GM10248 (cell line): ENCODE measurements at regions of chr2 and their contacts with region 1.

Region 1: GRCh38 chr2:152537081-152537651 is 180.1 kb downstream of the PRPF40A start:
- DNase-seq: no peak
- CTCF ChIP-seq: no peak

Region 2: DNA sequence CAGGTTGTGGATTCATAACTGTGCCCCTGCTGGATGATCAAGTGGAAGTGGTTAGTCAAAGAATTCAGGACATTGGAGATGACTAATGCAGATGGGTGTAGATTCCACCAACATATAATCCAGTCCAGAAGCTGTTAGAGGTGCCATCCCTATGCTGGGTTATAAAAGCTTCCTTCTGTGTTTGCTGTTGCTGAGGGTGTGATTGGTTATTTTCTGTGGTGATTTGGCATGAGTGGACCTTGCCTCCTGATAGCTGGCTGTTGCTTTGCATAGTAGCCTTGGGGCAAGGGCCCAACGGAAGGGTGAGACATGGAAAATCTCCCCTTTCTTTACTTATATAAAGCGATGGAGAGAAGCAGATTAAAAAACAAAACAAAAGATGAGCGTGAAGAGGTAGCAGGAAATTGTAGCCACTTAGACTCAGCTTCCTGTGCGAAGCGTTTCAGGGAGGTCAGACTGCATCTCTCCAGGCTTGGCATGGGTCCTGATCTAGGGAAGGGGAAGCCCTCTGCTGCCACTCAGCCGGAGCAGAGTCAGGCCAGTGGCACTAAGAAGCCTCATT is 11.8 kb before region 1 on chr2:
- CTCF ChIA-PET with region 1: interaction called, 12 read pairs
- POLR2A ChIA-PET with region 1: no interaction called
- DNase-seq: no peak
- CTCF ChIP-seq: no peak

Region 3: GRCh38 chr2:152549423-152549822 is 12.3 kb after region 1 on chr2:
- CTCF ChIA-PET with region 1: interaction called, 12 read pairs
- POLR2A ChIA-PET with region 1: no interaction called
- DNase-seq: no peak
- CTCF ChIP-seq: no peak